Naive thymus-derived CD4-positive, alpha-beta T cell (primary cell): ENCODE measurements at regions of chr12 and their contacts with region 1.

Region 1: DNA sequence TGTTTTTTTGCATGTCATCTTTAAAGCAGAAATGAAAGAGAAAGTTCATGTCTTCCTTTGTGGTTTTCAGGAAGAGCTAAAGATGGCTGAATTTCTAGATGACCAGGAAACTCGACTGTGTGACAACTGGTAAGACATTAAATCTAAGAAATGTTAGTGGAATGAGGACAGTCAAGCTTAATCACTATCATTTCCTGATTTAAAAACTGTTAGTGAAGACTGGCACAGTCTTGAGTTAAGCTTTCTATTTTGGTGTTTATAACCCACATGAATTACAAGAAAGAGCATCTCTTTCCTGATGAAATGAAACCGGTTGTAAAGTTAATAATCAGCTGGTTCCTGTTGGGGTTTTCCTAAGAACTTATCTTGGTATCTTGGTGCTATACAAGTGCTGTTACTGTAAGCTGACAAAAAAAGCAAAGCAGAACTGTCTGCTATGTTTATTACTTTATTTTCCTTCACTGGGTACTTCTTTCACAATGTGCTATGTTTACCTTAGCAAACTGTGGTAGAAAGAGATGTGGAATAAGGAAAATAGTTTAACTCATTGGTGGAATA is 5.2 kb downstream of the TRAFD1 start:
- DNase-seq: peak in 7 of 9 donors; percentile 38 to 75 (median 67)
- ATAC-seq: peak; percentile 89
- H3K4me3 ChIP-seq: peak overlapping the region; percentile 33
- H3K4me3 Mint-ChIP-seq: peak overlapping the region in 9 of 10 donors; percentile 52 to 81 (median 70)
- H3K27ac ChIP-seq: peak overlapping the region; percentile 72
- H3K27ac Mint-ChIP-seq: peak overlapping the region; percentile 3 to 91 (median 85)
- H3K4me1 ChIP-seq: peaks cover 38 to 55% of the 10 kb centered on the region in 2 donors
- H3K4me1 Mint-ChIP-seq: peaks cover 32 to 72% (median 59%) of the 10 kb centered on the region in 7 donors
- H3K27me3 ChIP-seq: no peaks in the 10 kb centered on the region
- H3K27me3 Mint-ChIP-seq: no peaks in the 10 kb centered on the region

Region 2: GRCh38 chr12:112108201-112109079 is 22.1 kb before region 1 on chr12 and contains the start of gene NAA25:
- CTCF ChIA-PET with region 1: interaction called, 8 read pairs
- POLR2A ChIA-PET with region 1: interaction called, 81 read pairs
- intact Hi-C with region 1: loop called (anchors 1 kb)
- DNase-seq: peak; percentile 79 to 90 (median 86)
- ATAC-seq: peak; percentile 92
- H3K4me3 ChIP-seq: peak within 1 kb of the TSS; percentile 100
- H3K4me3 Mint-ChIP-seq: peak within 1 kb of the TSS; percentile 96 to 99 (median 98)
- H3K27ac ChIP-seq: peak within 1 kb of the TSS; percentile 92
- H3K27ac Mint-ChIP-seq: peak within 1 kb of the TSS; percentile 93 to 98 (median 97)
- H3K4me1 ChIP-seq: peaks cover 12 to 22% of the 10 kb centered on the region in 2 donors
- H3K4me1 Mint-ChIP-seq: peaks cover 27 to 53% (median 45%) of the 10 kb centered on the region in 7 donors
- H3K27me3 ChIP-seq: no peaks in the 10 kb centered on the region
- H3K27me3 Mint-ChIP-seq: no peaks in the 10 kb centered on the region
- total RNA-seq, gene NAA25: 39.1 to 43.0 (median 42.1) TPM

Region 3: DNA sequence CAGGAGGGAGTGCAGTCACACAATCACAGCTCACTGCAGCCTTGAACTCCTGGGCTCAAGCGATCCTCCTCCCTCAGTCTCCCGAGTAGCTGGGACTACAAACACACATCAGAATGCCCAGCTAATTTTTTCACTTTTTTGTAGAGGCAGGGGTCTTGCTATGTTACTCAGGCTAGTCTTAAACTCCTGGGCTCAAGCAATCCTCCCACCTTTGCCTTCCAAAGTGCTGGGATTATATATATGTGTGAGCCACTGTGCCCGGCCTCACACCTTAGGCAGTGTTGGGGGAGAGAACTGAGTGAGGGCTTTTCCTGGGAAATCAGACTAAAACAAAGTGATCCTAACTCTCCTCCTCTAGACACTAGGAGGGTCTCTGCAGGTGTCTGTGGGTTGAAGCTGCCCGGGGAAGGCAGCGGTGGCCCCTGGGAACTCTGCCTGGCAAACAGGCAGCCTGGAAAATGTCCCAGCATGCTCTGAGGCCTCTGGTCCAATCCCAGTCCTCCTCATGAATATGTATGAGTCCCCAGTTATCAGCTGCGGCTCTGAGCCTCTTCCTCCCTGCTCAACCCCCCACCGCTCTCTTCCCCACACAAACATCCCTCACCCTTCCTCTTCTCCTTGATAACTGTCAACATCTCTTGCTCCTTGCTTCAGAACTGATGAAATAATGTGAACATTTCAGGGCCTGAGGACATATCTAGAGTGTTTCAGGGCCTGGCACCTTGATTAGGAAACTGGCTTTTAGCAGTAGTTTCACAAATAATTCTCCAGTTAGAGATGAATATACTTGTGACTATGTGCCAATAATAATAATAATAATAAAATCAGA is 14.1 kb before region 1 on chr12:
- CTCF ChIA-PET with region 1: no interaction called
- POLR2A ChIA-PET with region 1: interaction called, 12 read pairs
- intact Hi-C with region 1: loop called in 1 of 2 experiments (anchors 1 kb)
- DNase-seq: no peak
- ATAC-seq: peak; percentile 88
- H3K4me3 ChIP-seq: no peak overlapping the region
- H3K4me3 Mint-ChIP-seq: peak overlapping the region in 9 of 10 donors; percentile 14 to 73 (median 46)
- H3K27ac ChIP-seq: peak overlapping the region; percentile 39
- H3K27ac Mint-ChIP-seq: peak overlapping the region in 7 of 9 donors; percentile 16 to 92 (median 59)
- H3K4me1 ChIP-seq: no peaks in the 10 kb centered on the region
- H3K4me1 Mint-ChIP-seq: peaks cover 8 to 18% (median 8%) of the 10 kb centered on the region in 7 donors
- H3K27me3 ChIP-seq: no peaks in the 10 kb centered on the region
- H3K27me3 Mint-ChIP-seq: peaks cover 0 to 5% (median 0%) of the 10 kb centered on the region in 5 donors